BJ (cell line): ENCODE measurements at regions of chr5 and their contacts with region 1.

Region 1: DNA sequence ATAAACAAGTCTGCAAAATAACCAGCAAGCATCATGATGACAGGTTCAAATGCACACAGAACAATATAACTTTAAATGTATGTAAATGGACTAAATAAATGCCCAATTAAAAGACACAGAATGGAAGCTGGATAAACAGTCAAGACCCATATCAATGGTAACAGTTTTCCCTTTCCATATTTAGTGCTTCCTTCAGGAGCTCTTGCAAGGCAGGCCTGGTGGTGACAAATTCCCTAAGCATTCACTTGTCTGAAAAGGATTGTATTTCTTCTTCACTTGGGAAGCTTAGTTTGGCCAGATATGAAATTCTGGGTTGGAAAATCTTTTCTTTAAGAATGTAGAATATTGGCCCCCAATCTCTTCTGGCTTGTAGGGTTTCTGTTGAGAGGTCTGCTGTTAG is 120.2 kb upstream of the RASA1 start:
- DNase-seq: no peak
- H3K4me3 ChIP-seq: no peak overlapping the region
- H3K27me3 ChIP-seq: no peaks in the 10 kb centered on the region
- CTCF ChIP-seq: no peak

Region 2: DNA sequence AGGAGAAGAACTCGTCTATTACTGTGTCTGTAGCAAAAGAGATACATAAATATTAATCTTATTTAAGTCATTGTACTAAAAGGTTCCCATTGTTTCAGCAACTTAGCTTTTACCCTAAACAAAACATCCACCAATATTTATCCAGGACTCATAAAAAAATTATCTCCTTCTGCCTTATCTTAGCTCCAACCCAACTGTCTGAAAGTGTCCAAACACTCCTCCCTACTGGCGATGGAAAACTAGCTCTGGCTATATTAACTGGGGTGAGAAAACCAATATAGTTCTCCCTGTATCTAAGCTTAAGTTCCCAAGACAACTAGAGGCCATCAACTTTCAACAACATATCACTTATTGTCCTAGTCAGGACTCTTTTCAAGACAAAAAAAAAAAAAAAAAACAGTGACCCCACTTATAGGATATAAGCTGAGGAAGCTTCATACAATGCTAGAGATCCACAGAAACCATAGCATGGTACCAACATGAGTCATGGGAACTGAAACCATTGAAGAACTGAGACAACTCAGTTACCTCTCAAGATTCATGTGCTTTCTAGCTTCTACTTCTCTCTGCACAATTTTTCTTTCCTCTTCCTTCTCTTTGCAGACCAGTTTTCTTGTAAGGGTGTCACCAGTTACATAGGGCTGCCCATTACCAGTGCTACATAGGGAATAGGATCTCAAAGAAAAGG is 30.5 kb before region 1 on chr5:
- CTCF ChIA-PET with region 1: no interaction called
- POLR2A ChIA-PET with region 1: interaction called, 14 read pairs
- DNase-seq: no peak
- H3K4me3 ChIP-seq: no peak overlapping the region
- H3K27me3 ChIP-seq: no peaks in the 10 kb centered on the region
- CTCF ChIP-seq: no peak